Aorta (tissue), 5 donors: ENCODE measurements at regions of chr1 and their contacts with region 1.

Region 1: GRCh38 chr1:153572569-153573015 is 6.9 kb upstream of the S100A2 start:
- DNase-seq: peak; percentile 89 to 90
- ATAC-seq: peak; percentile 91
- H3K4me3 ChIP-seq: no peak overlapping the region
- H3K27ac ChIP-seq: peak overlapping the region in 1 of 2 donors; percentile 52
- H3K4me1 ChIP-seq: no peaks in the 10 kb centered on the region
- H3K27me3 ChIP-seq: no peaks in the 10 kb centered on the region

Region 2: GRCh38 chr1:153490272-153491051 is 82.1 kb before region 1 on chr1:
- intact Hi-C with region 1: no loop called
- DNase-seq: peak; percentile 81 to 87
- ATAC-seq: peak; percentile 65
- H3K4me3 ChIP-seq: no peak overlapping the region
- H3K27ac ChIP-seq: peak overlapping the region; percentile 87 to 94
- H3K4me1 ChIP-seq: peaks cover 0 to 8% of the 10 kb centered on the region in 2 donors
- H3K27me3 ChIP-seq: no peaks in the 10 kb centered on the region

Region 3: DNA sequence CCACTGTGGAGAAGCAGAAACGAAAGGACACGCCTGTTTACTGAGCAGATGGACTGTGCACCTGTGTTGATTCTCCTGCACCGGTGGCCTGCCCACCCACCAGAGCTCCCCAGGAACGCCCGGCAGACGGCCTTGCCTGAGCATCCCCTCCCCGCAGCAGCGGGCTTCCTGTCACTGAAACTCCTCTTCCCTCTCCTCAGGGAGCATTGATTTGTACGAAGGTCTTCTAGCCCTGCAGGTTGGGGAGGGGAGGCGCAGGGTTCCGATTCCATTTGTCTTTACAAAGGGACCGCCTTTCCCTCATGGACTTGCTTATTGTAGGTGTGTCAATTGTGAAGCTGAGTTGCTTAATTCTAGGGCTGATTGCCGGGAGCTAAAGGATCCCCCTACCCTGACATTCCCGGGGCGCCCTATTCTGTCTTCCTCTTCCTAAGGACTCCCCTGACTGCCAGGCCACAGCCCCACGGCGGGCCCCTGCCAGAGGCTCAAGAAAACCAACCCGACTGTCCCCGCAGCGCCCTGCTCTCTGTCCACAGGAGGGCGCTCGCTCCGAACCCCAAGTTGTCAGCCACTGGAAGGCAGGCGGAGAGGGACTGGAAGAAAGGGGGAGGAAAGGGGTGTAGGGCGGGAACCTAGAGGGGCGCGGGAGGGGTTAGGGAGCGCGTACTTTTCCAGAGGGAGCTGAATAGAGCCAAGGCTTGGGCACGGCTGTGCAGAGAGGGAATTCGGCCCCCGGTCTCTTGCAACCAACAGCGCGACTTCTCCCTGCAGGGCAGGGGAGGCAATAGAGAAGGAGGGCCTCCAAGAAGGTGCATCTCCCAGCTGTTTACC is 39.6 kb before region 1 on chr1:
- intact Hi-C with region 1: loop called (anchors 1 to 2 kb)
- DNase-seq: peak; percentile 91 to 95
- ATAC-seq: peak; percentile 83
- H3K4me3 ChIP-seq: peak overlapping the region; percentile 4 to 10
- H3K27ac ChIP-seq: peak overlapping the region; percentile 83 to 99
- H3K4me1 ChIP-seq: no peaks in the 10 kb centered on the region
- H3K27me3 ChIP-seq: no peaks in the 10 kb centered on the region

Region 4: GRCh38 chr1:153545067-153546055 is 27.2 kb before region 1 on chr1 and contains the start of gene S100A4:
- intact Hi-C with region 1: no loop called
- DNase-seq: peak; percentile 97 to 98
- ATAC-seq: peak; percentile 93
- H3K4me3 ChIP-seq: peak within 1 kb of the TSS; percentile 42 to 64
- H3K27ac ChIP-seq: peak within 1 kb of the TSS; percentile 14 to 77
- H3K4me1 ChIP-seq: no peaks in the 10 kb centered on the region
- H3K27me3 ChIP-seq: no peaks in the 10 kb centered on the region
- total RNA-seq, gene S100A4: 406 to 967 TPM

Region 5: DNA sequence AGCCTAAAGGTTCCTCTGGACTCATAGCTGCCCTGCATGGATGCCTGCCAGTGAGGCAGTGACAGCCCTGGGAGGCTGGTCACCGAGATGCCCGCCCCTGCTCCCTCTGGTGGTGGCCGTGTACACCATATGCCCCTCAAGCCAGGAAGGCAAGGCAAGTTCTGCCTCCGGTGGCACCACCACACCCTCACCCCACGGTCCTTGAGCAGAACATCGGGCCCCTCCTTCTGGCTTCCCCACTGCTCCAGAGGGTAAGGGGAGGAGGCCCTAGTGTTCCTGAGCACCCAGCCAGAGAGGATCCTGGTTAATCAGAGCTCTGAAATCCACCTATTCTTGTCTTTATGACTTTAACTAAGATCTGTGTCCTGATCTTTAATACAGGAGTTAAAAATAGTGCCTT is 45.1 kb after region 1 on chr1:
- intact Hi-C with region 1: loop called (anchors 5 kb)
- DNase-seq: peak; percentile 87 to 93
- ATAC-seq: peak; percentile 74
- H3K4me3 ChIP-seq: no peak overlapping the region
- H3K27ac ChIP-seq: no peak overlapping the region
- H3K4me1 ChIP-seq: peaks cover 0 to 1% of the 10 kb centered on the region in 2 donors
- H3K27me3 ChIP-seq: no peaks in the 10 kb centered on the region

Region 6: DNA sequence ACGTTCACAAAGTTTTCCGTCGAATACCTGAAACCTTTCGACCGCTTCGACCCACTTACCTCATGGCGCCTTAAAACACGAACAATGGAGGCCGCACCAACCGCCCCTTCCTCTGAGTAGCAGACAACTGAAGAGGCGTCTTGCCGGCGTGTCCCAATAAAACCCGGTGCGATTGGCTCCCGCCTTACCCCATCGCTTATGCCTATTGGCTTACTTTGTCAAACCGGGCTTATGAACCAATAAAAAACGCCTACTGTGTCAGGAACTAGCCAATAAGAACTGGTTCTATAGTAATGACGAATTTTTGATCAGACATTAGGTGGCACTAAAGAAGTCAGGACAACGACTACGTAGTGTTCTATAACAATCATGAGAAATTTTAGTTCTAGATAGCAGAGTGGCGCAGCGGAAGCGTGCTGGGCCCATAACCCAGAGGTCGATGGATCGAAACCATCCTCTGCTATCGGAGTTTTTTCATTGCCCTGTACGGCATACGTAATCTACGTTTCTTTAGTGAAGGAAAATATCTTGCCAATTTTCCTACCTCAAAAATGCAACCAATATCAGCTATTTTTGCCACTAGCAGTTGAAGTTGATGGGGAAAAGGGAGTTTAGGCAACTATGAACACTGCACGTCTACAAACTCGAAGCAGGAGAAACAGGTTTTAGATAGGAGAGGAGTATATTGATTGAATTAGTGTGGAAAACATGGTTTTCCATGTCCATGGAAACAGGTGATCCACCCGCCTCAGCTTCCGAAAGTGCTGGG is 98.5 kb after region 1 on chr1 and contains the start of gene ILF2:
- intact Hi-C with region 1: loop called in 1 of 2 experiments (anchors 10 kb)
- DNase-seq: peak; percentile 99
- ATAC-seq: peak; percentile 96
- H3K4me3 ChIP-seq: peak within 1 kb of the TSS; percentile 74 to 82
- H3K27ac ChIP-seq: peak within 1 kb of the TSS; percentile 22 to 87
- H3K4me1 ChIP-seq: no peaks in the 10 kb centered on the region
- H3K27me3 ChIP-seq: no peaks in the 10 kb centered on the region
- total RNA-seq, gene ILF2: 70.6 to 82.9 TPM

Region 7: GRCh38 chr1:153763365-153764225 is 191.0 kb after region 1 on chr1:
- intact Hi-C with region 1: no loop called
- DNase-seq: no peak
- ATAC-seq: peak; percentile 20
- H3K4me3 ChIP-seq: no peak overlapping the region
- H3K27ac ChIP-seq: peak overlapping the region in 1 of 2 donors; percentile 11
- H3K4me1 ChIP-seq: no peaks in the 10 kb centered on the region
- H3K27me3 ChIP-seq: no peaks in the 10 kb centered on the region

Region 8: GRCh38 chr1:153827168-153827964 is 254.8 kb after region 1 on chr1:
- intact Hi-C with region 1: no loop called
- DNase-seq: no peak
- ATAC-seq: no peak
- H3K4me3 ChIP-seq: no peak overlapping the region
- H3K27ac ChIP-seq: no peak overlapping the region
- H3K4me1 ChIP-seq: peaks cover 0 to 3% of the 10 kb centered on the region in 2 donors
- H3K27me3 ChIP-seq: no peaks in the 10 kb centered on the region